ENCODE measurements at regions of chrX and their contacts with region 1.

Region 1: GRCh38 chrX:69615779-69616456 is at the start of gene EDA:
- DNase-seq: peak; percentile 74
- H3K4me3 Mint-ChIP-seq: peak within 1 kb of the TSS; percentile 84
- H3K27ac Mint-ChIP-seq: no peak within 1 kb of the TSS
- H3K4me1 Mint-ChIP-seq: peaks cover 21% of the 10 kb centered on the region
- H3K27me3 Mint-ChIP-seq: peaks cover 3% of the 10 kb centered on the region
- total RNA-seq, gene EDA: 4.2 to 5.1 TPM

Region 2: GRCh38 chrX:69195192-69195591 is 420.7 kb before region 1 on chrX:
- CTCF ChIA-PET with region 1: no interaction called
- intact Hi-C with region 1: no loop called
- DNase-seq: no peak
- H3K4me3 Mint-ChIP-seq: no peak overlapping the region
- H3K27ac Mint-ChIP-seq: no peak overlapping the region
- H3K4me1 Mint-ChIP-seq: no peaks in the 10 kb centered on the region
- H3K27me3 Mint-ChIP-seq: no peaks in the 10 kb centered on the region

Region 3: DNA sequence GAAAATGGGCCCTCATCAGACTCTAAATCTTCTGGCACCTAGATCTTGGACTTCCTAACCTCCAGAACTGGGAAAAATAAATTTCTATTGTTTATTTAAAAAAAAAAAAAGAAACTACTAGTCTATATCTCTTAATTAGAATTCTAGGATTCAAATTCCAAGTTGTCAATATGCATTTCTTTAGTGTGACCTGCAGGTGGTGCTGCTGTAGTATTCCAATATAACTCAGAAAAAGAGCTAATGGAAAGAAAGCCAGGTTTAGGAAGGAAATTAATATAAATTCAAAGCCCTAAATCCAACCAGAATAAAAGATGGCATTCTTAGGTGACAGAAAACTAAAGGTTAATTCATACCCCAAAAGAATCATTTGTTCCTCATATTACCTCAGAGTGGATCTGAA is 191.8 kb before region 1 on chrX:
- CTCF ChIA-PET with region 1: no interaction called
- intact Hi-C with region 1: loop called (anchors 10 kb)
- DNase-seq: peak; percentile 5
- H3K4me3 Mint-ChIP-seq: no peak overlapping the region
- H3K27ac Mint-ChIP-seq: no peak overlapping the region
- H3K4me1 Mint-ChIP-seq: no peaks in the 10 kb centered on the region
- H3K27me3 Mint-ChIP-seq: no peaks in the 10 kb centered on the region

Region 4: GRCh38 chrX:69503782-69504625 is 111.9 kb before region 1 on chrX and contains the start of gene NALF2:
- CTCF ChIA-PET with region 1: no interaction called
- intact Hi-C with region 1: loop called (anchors 2 kb)
- DNase-seq: peak; percentile 61
- H3K4me3 Mint-ChIP-seq: peak within 1 kb of the TSS; percentile 77
- H3K27ac Mint-ChIP-seq: no peak within 1 kb of the TSS
- H3K4me1 Mint-ChIP-seq: peaks cover 4% of the 10 kb centered on the region
- H3K27me3 Mint-ChIP-seq: peaks cover 15% of the 10 kb centered on the region
- total RNA-seq, gene NALF2: 0.22 to 0.29 TPM

Region 5: DNA sequence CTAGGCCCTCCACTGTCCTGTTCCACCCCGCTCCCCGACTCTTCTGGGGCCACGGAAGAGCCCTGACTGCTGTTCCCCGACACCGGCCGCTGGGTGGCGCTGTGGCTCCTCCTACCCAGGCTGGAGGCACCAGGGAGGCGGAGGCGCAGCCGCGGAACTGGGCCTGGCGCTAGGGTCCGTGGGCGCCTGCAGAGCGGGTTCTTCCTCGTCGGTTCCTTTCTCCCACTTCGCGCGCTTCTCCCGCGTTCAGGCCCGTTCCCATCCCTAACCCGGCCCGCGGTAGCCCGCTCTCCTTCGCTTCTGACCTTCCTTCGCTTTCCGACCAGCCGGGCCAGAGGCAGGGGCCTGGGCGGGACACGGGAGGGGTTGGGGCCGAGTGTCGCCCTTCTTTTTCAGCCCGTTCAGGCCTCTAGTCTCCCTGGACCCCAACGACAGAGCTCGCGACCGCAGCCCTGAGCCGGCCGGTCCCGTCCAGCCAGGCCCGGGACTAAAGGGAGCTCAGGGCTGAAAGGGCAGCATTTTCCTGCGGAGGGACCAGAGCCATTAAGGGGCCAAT is 77.5 kb before region 1 on chrX:
- CTCF ChIA-PET with region 1: interaction called, 4 read pairs
- intact Hi-C with region 1: loop called (anchors 1 kb)
- DNase-seq: peak; percentile 79
- H3K4me3 Mint-ChIP-seq: peak overlapping the region; percentile 43
- H3K27ac Mint-ChIP-seq: no peak overlapping the region
- H3K4me1 Mint-ChIP-seq: peaks cover 10% of the 10 kb centered on the region
- H3K27me3 Mint-ChIP-seq: peaks cover 2% of the 10 kb centered on the region

Region 6: DNA sequence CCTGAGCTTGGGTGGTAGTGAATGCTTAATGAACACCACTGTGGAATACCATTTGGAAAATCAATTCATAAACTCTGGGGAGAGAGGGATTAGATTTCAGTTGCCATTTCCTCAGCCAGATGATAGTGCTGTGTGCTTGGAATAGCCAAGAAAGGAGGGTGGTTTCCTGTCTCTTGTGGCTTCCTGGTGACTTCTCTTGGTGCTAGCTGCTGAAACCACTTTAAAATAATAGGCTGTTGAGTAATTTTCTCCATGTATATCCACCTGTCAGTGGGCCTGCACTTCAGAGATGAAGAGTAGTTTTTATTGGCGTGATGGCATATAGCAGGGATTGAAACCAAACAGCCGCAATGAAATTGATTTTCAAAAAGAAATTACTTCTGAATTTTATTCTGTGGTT is 11.8 kb after region 1 on chrX:
- CTCF ChIA-PET with region 1: interaction called, 9 read pairs
- intact Hi-C with region 1: loop called (anchors 1 kb)
- DNase-seq: peak; percentile 25
- H3K4me3 Mint-ChIP-seq: no peak overlapping the region
- H3K27ac Mint-ChIP-seq: peak overlapping the region; percentile 59
- H3K4me1 Mint-ChIP-seq: peaks cover 33% of the 10 kb centered on the region
- H3K27me3 Mint-ChIP-seq: no peaks in the 10 kb centered on the region

Region 7: DNA sequence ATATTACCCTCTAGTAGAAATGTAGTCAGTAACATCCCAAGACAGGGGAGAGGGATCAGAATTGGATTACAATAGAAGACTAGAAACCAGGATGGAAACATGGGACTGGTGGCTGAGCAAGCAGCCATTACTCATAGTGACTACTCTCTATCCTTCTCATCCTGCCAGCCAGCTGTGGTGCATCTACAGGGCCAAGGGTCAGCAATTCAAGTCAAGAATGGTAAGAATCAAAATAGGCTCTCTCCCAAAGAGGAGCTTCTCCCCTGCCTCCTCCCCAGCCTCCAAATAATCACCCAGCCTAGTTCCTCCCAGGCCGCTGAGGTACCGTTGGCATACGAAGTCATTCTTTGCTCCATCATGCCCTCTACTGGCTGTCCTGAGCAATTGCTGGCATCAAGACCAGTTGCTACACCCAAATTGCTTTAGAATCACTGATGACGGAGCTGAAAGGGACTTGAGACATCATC is 414.4 kb after region 1 on chrX:
- CTCF ChIA-PET with region 1: interaction called, 6 read pairs
- intact Hi-C with region 1: loop called (anchors 2 kb)
- DNase-seq: peak; percentile 60
- H3K4me3 Mint-ChIP-seq: no peak overlapping the region
- H3K27ac Mint-ChIP-seq: no peak overlapping the region
- H3K4me1 Mint-ChIP-seq: peaks cover 26% of the 10 kb centered on the region
- H3K27me3 Mint-ChIP-seq: no peaks in the 10 kb centered on the region

Region 8: DNA sequence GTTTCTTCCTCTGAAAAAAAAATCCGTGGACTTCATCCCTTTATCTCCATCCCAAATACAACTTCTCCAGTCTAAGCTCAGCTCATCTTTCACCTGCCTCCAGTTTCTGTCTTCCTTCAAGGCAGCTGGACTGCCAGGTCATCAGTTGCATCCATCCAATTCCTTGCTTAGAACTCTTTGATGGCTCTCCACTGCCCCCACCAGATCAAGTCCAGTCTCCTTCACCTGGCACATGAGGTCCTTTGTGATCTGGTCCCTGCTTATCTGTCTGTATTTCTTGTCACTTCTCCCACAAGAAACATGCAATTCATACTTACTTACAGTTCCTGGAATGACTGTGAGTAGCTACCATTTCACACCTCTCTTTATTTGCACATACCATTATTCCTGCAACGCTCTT is 480.1 kb after region 1 on chrX:
- CTCF ChIA-PET with region 1: no interaction called
- intact Hi-C with region 1: loop called (anchors 10 kb)
- DNase-seq: peak; percentile 5
- H3K4me3 Mint-ChIP-seq: no peak overlapping the region
- H3K27ac Mint-ChIP-seq: no peak overlapping the region
- H3K4me1 Mint-ChIP-seq: no peaks in the 10 kb centered on the region
- H3K27me3 Mint-ChIP-seq: peaks cover 5% of the 10 kb centered on the region

Measured in activated naive CD4-positive, alpha-beta T cell treated with anti-CD3 and anti-CD28 coated beads for 36 hours (primary cell).